ENCODE measurements at regions of chr3 and their contacts with region 1.

Region 1: DNA sequence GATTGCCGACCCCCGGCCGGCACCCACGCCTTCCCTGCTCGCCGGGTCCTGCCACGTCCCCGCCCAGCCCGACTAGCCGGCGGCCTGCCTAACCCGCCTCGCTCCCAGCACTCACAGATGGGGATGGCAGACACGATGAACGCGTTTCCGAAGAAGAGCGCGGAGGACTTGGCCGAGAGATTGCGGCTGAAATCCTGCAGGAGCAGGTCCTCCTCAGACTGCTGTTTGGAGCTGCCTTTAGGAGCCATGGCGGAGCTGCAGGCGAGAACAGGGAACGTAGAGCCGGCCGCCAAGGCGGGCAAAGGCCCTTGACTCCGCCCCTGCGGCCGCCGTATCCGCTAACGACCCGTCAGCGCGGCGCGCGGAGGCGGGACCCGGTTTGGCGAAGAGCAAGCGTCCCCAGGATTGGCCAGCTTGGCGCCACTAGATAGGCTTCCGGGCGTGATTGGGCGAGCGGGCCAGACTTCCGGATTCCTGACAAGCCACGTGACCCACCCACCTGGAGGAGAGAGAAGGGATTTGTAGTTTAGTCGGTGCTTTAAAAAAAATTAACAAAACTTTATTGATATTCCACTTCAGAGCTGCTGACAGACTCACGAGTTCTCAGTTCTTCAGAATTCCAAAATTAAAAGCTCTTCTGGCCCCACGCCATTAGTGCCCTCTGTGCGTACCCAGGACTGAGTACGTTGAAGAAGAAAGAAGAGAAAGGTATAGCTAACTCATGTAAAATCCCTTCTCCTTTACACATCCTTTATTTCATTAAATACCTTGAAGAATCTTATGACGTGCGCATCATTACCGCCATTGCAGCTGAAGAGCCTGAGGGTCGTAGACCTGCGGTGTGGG is at the start of gene SSR3:
- DNase-seq: peak; percentile 95 to 99 (median 98)
- ATAC-seq: peak; percentile 100
- H3K4me3 ChIP-seq: peak within 1 kb of the TSS; percentile 95
- H3K4me3 Mint-ChIP-seq: peak within 1 kb of the TSS; percentile 88 to 98 (median 97)
- H3K27ac ChIP-seq: peak within 1 kb of the TSS; percentile 85
- H3K27ac Mint-ChIP-seq: peak within 1 kb of the TSS; percentile 89 to 96 (median 92)
- H3K4me1 ChIP-seq: peaks cover 16% of the 10 kb centered on the region in 2 donors
- H3K4me1 Mint-ChIP-seq: peaks cover 29 to 57% (median 50%) of the 10 kb centered on the region in 7 donors
- H3K27me3 ChIP-seq: no peaks in the 10 kb centered on the region
- H3K27me3 Mint-ChIP-seq: no peaks in the 10 kb centered on the region
- total RNA-seq, gene SSR3: 56.0 to 158 (median 76.2) TPM

Region 2: GRCh38 chr3:156132313-156132712 is 422.8 kb before region 1 on chr3:
- CTCF ChIA-PET with region 1: no interaction called
- POLR2A ChIA-PET with region 1: no interaction called
- intact Hi-C with region 1: no loop called
- DNase-seq: no peak
- ATAC-seq: no peak
- H3K4me3 ChIP-seq: no peak overlapping the region
- H3K4me3 Mint-ChIP-seq: no peak overlapping the region
- H3K27ac ChIP-seq: no peak overlapping the region
- H3K27ac Mint-ChIP-seq: no peak overlapping the region
- H3K4me1 ChIP-seq: no peaks in the 10 kb centered on the region
- H3K4me1 Mint-ChIP-seq: no peaks in the 10 kb centered on the region
- H3K27me3 ChIP-seq: no peaks in the 10 kb centered on the region
- H3K27me3 Mint-ChIP-seq: peaks cover 0 to 41% (median 21%) of the 10 kb centered on the region in 5 donors

Region 3: DNA sequence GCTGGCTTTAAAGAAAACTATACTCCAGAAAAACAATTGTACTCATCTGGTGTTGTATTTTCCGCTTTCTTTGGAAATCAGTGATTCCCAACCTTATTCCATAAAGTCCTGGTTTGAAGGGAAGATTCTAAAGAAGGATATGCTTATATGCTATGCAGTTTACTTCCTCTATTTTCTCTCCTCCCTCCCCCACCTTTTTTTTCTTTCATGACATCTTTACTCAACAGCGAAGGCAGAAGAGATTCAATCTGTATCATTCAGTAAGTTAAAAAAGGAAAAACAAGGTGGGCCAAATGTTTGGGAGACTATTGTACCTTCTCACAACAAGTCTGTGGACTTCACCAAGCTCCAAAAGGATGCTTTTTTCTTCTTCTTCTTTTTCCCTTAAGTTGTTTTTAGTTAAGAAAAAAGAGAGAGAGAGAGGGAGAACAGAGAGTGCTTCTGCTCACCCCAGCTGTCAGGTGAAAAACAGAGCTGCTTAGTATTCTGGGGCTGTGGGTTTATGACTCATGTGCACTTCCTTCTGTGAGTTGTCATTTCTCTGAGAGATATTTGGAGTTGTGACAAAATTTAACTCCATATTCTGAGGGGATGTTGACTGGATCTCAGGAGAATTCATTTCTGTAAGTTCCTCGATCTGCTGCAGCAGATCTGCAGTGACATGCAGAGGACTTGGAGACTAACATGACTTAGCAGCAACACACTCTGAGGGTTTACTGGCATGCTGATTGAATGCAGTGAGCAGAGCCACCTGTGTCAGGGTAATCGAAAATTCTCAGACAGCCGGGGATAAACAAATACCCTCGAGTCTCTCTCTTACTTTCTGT is 70.9 kb before region 1 on chr3:
- CTCF ChIA-PET with region 1: no interaction called
- POLR2A ChIA-PET with region 1: interaction called, 4 read pairs
- intact Hi-C with region 1: loop called (anchors 1 kb)
- DNase-seq: peak in 8 of 9 donors; percentile 35 to 68 (median 62)
- ATAC-seq: peak; percentile 88
- H3K4me3 ChIP-seq: peak overlapping the region; percentile 47
- H3K4me3 Mint-ChIP-seq: peak overlapping the region; percentile 52 to 85 (median 74)
- H3K27ac ChIP-seq: peak overlapping the region; percentile 63
- H3K27ac Mint-ChIP-seq: peak overlapping the region; percentile 76 to 95 (median 83)
- H3K4me1 ChIP-seq: peaks cover 21 to 25% of the 10 kb centered on the region in 2 donors
- H3K4me1 Mint-ChIP-seq: peaks cover 14 to 40% (median 35%) of the 10 kb centered on the region in 7 donors
- H3K27me3 ChIP-seq: no peaks in the 10 kb centered on the region
- H3K27me3 Mint-ChIP-seq: peaks cover 0 to 17% (median 0%) of the 10 kb centered on the region in 5 donors

Region 4: DNA sequence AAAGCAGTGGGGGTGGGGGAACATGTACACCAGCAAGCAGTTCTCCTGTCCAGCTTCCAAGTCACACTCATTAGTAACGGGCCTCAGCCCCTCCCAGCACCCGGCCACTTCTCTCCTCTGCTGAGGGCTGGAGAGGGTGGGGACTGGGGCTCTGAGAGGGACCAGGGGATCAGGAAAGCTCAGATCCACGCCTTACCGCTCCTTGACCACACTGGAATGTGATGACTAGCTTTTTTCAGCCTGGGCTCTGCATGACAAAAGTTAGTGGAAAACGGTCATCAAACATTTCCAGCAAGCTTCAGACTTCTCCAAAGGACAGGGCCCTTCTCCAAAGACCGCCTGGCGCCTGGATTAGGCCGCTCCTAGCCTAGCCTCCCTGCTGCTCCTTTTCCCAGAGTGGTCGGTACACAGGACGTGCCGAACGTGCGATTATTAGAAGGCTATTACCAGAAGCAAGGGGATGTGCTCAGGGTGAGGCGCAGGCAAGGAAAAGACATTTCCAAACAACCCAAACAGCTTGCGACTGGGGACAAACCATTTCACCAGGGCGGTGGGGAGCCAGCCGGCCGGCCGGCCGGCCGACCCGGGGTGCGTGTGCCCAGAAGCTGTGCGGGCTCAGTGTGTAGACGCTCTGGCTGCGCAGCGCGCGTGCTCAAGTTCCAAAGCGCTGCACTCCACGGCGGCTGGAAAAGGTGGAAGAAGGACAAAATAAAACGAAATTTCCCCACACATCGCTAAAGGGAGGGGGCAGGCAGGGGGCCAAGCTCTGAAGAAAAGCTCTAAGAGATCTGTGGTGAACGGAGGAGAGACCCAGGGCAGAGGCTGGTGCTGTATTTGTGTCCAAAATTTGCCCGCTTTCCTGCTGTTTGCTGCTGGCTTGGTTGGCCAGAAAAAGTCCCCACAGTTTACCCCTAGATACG is 50.9 kb after region 1 on chr3:
- CTCF ChIA-PET with region 1: no interaction called
- POLR2A ChIA-PET with region 1: interaction called, 4 read pairs
- intact Hi-C with region 1: loop called in 1 of 2 experiments (anchors 2 kb)
- DNase-seq: no peak
- ATAC-seq: peak; percentile 51
- H3K4me3 ChIP-seq: peak overlapping the region; percentile 17
- H3K4me3 Mint-ChIP-seq: peak overlapping the region; percentile 18 to 88 (median 68)
- H3K27ac ChIP-seq: no peak overlapping the region
- H3K27ac Mint-ChIP-seq: peak overlapping the region in 1 of 9 donors; percentile 74
- H3K4me1 ChIP-seq: peaks cover 0 to 5% of the 10 kb centered on the region in 2 donors
- H3K4me1 Mint-ChIP-seq: peaks cover 5 to 45% (median 10%) of the 10 kb centered on the region in 7 donors
- H3K27me3 ChIP-seq: no peaks in the 10 kb centered on the region
- H3K27me3 Mint-ChIP-seq: peaks cover 25 to 32% (median 27%) of the 10 kb centered on the region in 5 donors

Region 5: DNA sequence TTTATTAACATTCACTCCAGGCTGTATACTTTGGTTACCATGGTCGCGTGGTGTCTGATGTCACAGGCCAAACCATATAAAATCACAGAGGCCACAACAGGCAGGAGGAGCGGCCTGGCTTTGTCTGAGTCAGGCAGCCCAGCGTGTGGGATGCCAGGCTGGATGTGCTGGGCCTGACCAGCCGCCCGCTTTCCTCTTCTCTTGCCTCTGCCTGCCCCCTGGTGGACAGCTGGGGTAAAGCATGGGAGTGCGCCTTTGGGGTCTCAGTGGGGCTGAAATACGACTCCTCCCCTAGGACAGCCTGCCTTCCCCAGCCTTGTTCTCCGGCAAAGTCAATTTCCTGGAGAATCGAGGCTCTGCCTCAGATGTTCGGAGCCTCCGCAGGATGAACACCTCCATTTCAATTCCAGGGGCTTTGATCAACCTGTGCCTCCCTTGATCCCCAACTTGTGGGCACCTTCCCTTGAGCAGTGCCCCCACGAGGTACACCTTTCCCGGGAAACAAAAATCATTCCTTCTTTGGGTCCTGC is 526.7 kb after region 1 on chr3:
- CTCF ChIA-PET with region 1: interaction called, 7 read pairs
- POLR2A ChIA-PET with region 1: interaction called, 4 read pairs
- intact Hi-C with region 1: loop called in 1 of 2 experiments (anchors 1 kb)
- DNase-seq: peak; percentile 60 to 86 (median 70)
- ATAC-seq: peak; percentile 96
- H3K4me3 ChIP-seq: no peak overlapping the region
- H3K4me3 Mint-ChIP-seq: no peak overlapping the region
- H3K27ac ChIP-seq: no peak overlapping the region
- H3K27ac Mint-ChIP-seq: peak overlapping the region in 8 of 9 donors; percentile 9 to 79 (median 56)
- H3K4me1 ChIP-seq: peaks cover 0 to 12% of the 10 kb centered on the region in 2 donors
- H3K4me1 Mint-ChIP-seq: peaks cover 0 to 54% (median 6%) of the 10 kb centered on the region in 7 donors
- H3K27me3 ChIP-seq: no peaks in the 10 kb centered on the region
- H3K27me3 Mint-ChIP-seq: no peaks in the 10 kb centered on the region

Region 6: DNA sequence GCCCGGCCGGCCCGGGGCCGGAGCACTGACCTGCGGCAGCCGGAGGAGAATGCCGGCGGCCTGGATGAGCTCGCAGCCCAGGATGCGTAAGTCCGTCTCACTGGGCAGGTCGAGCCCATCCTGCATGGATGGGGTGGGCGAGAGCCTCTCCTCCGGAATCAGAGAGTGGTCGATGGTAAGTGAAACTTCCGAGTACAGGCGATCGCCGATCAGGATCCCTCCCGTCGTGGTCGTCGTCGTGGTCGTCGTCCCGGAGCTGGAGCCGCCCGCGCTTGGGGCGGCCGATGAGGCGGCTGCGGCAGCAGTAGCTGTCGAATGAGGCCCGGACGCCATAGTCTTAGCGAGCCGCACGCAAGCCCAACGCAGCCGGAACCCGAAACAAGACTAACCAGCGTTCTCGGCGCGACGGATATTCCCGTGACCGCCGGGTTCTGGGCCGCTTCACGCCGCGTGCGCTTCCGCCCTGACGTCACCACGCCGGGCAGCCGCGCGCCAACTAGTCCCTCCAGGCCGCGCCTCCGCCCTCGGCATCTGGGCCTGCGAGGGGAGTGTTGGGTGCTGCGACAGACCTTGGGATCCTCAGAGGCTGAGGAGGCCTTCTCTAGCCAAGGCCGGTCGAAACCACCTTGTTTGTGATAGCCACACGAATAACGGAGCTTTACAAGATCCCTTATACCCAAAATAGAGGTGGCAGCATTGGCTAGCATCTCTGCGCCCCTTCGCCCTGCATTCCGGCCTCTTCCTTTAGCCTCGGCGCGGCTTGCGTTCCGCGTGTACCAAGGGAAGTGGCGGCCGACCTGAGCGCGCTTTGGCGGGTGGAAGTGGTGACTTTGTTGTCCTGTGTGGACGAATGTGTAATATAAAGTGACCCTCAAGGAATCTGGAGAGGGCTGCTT is 604.9 kb after region 1 on chr3 and contains the start of gene CCNL1:
- CTCF ChIA-PET with region 1: no interaction called
- POLR2A ChIA-PET with region 1: interaction called, 19 read pairs
- intact Hi-C with region 1: loop called (anchors 1 kb)
- DNase-seq: peak; percentile 94 to 98 (median 97)
- ATAC-seq: peak; percentile 88
- H3K4me3 ChIP-seq: peak within 1 kb of the TSS; percentile 92
- H3K4me3 Mint-ChIP-seq: peak within 1 kb of the TSS; percentile 91 to 100 (median 96)
- H3K27ac ChIP-seq: peak within 1 kb of the TSS; percentile 97
- H3K27ac Mint-ChIP-seq: peak within 1 kb of the TSS; percentile 96 to 100 (median 98)
- H3K4me1 ChIP-seq: peaks cover 39 to 45% of the 10 kb centered on the region in 2 donors
- H3K4me1 Mint-ChIP-seq: peaks cover 37 to 69% (median 65%) of the 10 kb centered on the region in 7 donors
- H3K27me3 ChIP-seq: no peaks in the 10 kb centered on the region
- H3K27me3 Mint-ChIP-seq: no peaks in the 10 kb centered on the region
- total RNA-seq, gene CCNL1: 230 to 1,170 (median 374) TPM